AG04450 (cell line): ENCODE measurements at regions of chr18 and their contacts with region 1.

Region 1: DNA sequence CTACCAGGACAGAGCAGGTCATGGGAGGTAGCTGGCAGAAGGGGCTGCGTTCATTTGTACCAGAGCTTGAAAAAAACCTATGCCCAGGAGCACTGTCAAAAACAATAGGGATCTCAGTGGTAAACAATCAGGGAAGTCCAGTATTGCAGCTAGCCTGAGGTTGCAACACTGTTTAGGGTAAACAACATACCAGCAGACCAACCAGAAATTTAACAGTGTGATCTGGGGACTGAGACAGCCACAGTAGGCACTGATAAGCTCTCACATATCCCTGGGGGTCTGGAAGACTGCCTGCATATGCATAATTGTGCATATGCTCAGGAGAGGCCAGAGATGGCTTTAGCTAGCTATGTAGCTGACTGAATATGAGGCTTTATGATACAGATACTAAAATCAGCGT is 12.0 kb upstream of the ZCCHC2 start:
- DNase-seq: no peak
- H3K4me3 ChIP-seq: no peak overlapping the region
- H3K27ac ChIP-seq: no peak overlapping the region
- H3K27me3 ChIP-seq: peaks cover 9% of the 10 kb centered on the region
- CTCF ChIP-seq: no peak

Region 2: GRCh38 chr18:62605685-62606084 is 94.9 kb after region 1 on chr18:
- CTCF ChIA-PET with region 1: interaction called, 11 read pairs
- POLR2A ChIA-PET with region 1: no interaction called
- DNase-seq: no peak
- H3K4me3 ChIP-seq: no peak overlapping the region
- H3K27ac ChIP-seq: no peak overlapping the region
- H3K27me3 ChIP-seq: peaks cover 27% of the 10 kb centered on the region
- CTCF ChIP-seq: no peak

Region 3: DNA sequence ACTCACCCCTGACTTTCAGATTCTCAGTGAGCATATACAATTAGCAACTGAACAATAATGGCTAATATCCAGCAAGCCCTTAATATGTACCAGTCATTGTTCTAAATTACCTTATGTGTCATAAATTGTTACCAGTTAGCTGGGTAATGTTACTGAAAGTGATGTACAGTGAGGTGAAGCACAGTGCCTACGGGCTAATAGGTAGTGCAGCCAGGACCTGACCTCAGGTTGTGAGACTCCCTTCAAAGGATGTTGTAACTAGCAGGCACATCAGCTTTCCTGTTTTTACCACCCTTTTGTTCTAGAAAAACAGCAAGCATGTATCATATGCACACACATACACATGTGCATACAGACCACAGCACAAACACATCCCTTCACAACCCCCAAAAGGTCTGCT is 462.9 kb after region 1 on chr18:
- CTCF ChIA-PET with region 1: no interaction called
- POLR2A ChIA-PET with region 1: no interaction called
- DNase-seq: no peak
- H3K4me3 ChIP-seq: no peak overlapping the region
- H3K27ac ChIP-seq: no peak overlapping the region
- H3K27me3 ChIP-seq: no peaks in the 10 kb centered on the region
- CTCF ChIP-seq: no peak